ENCODE measurements at regions of chr6 and their contacts with region 1.

Region 1: GRCh38 chr6:70586114-70586513 is 19.4 kb downstream of the SDHAF4 start:
- DNase-seq: no peak

Region 2: DNA sequence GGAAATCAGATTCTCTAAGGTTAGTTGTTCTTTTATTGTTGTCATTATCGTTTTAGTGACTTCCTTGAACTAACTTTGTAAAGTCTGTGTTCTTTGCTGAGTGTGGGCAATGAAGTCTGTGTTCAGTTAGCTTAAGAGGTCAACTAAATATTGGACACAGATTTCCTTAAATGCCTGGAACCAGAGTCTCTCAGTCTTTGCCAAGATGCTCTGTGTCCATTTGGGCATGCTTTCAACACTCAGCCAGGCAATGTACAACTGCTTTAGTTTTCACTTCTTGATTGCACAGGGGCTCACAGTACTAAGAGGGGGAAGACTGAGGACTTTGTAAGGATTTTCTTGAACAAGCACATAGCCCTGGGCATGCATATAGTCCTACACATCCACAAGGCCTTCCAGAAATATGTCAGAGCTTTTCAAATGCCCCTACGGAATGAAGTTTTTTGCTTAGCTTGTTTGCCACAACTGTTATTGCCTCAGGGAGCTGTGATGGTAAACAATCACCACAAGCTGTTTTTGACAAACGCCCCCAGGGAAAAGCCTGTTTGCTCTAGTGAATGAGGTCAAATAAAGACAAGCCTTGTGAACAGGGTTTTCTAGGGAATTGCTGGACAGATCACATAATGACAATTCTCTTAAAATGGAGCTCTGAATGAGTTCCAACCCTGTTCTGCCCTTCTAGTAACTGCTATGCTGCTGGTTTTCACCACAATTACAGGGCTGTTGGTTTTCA is 288.2 kb after region 1 on chr6:
- intact Hi-C with region 1: no loop called
- DNase-seq: no peak

Region 3: DNA sequence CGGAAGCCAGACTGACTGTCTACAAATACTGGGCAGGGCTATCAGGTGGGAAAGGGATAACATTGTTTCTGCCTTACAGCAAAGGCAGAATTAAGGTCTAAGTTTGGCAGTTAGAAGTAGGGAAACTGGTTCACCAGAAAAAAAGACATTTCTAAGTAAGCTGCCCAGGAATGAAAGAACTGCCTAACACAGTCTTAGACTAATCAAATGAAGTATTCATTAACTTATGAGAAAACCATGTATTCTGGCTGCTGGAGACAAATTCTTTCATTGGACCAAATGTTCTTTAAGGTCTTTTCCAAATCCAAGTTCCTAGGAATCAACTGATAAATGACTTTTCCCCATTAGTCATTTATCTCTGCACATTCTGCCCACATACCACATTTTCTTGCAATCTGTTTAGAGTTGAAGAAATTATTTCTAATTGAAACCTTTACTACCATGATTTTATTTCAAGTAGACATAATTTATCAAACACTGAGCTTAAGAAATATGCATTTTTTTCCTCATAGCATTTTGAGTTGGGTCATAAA is 582.2 kb after region 1 on chr6:
- intact Hi-C with region 1: loop called in 1 of 2 experiments (anchors 10 kb)
- DNase-seq: no peak

Region 4: DNA sequence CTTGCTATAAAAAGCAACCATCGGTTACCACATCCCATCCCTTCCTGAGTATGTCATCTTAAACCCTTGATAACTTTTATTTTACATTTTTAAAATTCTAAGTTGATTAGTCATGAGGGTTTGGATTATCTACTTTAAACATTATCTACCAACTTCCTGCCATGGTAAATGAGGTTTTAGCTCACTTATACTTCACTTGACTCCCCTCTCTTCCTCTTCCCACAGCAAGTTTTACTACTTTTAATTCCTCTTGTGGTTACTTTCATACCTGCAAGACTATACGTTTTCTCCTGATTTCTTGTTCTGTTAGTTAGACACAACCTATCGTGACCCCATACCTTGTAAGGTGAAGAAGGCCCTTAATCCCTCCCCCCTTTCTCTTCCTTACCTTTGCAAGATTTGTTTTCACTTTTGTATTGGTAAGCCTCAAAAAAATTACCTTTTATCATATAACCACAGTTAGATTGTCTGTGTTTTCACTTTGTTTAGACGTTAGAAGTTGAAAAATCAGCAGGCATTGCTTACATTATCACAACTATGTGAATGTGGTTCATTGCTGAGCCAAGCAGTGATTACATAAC is 642.4 kb after region 1 on chr6:
- intact Hi-C with region 1: no loop called
- DNase-seq: no peak

Measured in posterior vena cava (tissue), 2 donors.